Activated CD8-positive, alpha-beta T cell treated with anti-CD3 and anti-CD28 coated beads for 36 hours (primary cell): ENCODE measurements at regions of chr7 and their contacts with region 1.

Region 1: GRCh38 chr7:44824894-44825526 is 22.9 kb downstream of the H2AZ2 start:
- DNase-seq: no peak
- ATAC-seq: peak; percentile 64
- H3K4me3 Mint-ChIP-seq: no peak overlapping the region
- H3K27ac Mint-ChIP-seq: peak overlapping the region; percentile 66
- H3K4me1 Mint-ChIP-seq: peaks cover 14% of the 10 kb centered on the region
- H3K27me3 Mint-ChIP-seq: no peaks in the 10 kb centered on the region
- CTCF ChIP-seq: no peak

Region 2: DNA sequence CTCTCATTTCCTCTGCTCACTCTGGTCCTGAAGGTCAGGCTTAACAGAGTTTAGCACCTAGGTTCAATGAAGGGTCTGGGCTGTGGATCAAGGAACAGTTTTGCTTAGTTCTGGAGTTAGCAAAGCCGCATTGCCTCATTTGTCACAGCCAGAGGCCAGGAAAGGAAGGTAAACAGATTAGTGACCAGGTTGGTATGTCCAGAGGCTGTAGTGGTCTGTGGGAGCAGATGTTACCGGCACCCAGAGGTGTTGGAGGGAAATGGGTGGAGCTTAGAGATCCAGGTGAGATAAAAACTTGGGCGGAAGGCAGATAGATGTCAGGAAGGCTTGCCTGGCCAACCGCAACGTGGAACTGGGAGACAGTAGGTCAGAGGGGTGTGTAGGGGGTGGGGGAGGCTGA is 113.0 kb before region 1 on chr7:
- CTCF ChIA-PET with region 1: no interaction called
- POLR2A ChIA-PET with region 1: no interaction called
- intact Hi-C with region 1: no loop called
- DNase-seq: no peak
- ATAC-seq: no peak
- H3K4me3 Mint-ChIP-seq: no peak overlapping the region
- H3K27ac Mint-ChIP-seq: peak overlapping the region; percentile 25
- H3K4me1 Mint-ChIP-seq: peaks cover 4% of the 10 kb centered on the region
- H3K27me3 Mint-ChIP-seq: no peaks in the 10 kb centered on the region
- CTCF ChIP-seq: no peak

Region 3: GRCh38 chr7:44805950-44806349 is 19.1 kb before region 1 on chr7:
- CTCF ChIA-PET with region 1: interaction called, 5 read pairs
- POLR2A ChIA-PET with region 1: interaction called, 14 read pairs
- intact Hi-C with region 1: no loop called
- DNase-seq: no peak
- ATAC-seq: no peak
- H3K4me3 Mint-ChIP-seq: no peak overlapping the region
- H3K27ac Mint-ChIP-seq: no peak overlapping the region
- H3K4me1 Mint-ChIP-seq: peaks cover 11% of the 10 kb centered on the region
- H3K27me3 Mint-ChIP-seq: no peaks in the 10 kb centered on the region
- CTCF ChIP-seq: no peak